Heart left ventricle (tissue), 16 donors: ENCODE measurements at regions of chr20 and their contacts with region 1.

Region 1: DNA sequence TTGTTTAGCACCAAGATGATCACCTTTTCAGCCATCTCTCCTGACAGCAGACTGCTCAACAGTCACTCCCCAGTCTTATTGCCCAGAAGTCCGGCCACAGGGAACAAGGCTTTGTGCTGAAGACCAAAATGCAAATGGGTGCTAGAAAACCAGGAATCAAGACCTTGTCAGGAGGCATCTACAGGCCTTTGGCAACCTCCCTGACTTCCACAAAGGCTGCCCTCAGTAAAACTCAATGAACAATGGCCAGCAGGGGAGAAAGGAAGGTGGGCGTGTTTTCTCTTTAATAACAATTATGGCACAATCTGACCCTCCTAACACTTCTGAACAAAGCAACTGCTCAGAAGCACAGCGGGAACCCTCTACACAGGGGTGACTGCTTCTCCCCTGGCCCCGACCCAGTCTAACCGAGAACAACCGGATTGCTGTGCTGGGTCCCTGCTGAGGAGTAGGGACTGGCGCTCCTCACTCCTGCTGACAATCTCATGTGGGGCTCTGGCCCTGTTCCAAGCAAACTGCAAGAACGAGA is 41.6 kb downstream of the PLCG1 start:
- DNase-seq: peak in 4 of 5 donors; percentile 47 to 68 (median 64)
- ATAC-seq: peak; percentile 11 to 42 (median 27)
- H3K4me3 ChIP-seq: no peak overlapping the region
- H3K27ac ChIP-seq: peak overlapping the region; percentile 66 to 93 (median 82)
- H3K4me1 ChIP-seq: peaks cover 12 to 69% (median 52%) of the 10 kb centered on the region in 12 donors
- H3K27me3 ChIP-seq: no peaks in the 10 kb centered on the region
- CTCF ChIP-seq: peak in 3 of 12 donors; percentile 16 to 17 (median 16)
- POLR2A ChIP-seq: no peak

Region 2: GRCh38 chr20:41057999-41058896 is 120.7 kb before region 1 on chr20:
- intact Hi-C with region 1: no loop called
- DNase-seq: no peak
- ATAC-seq: peak in 3 of 4 donors; percentile 66 to 80 (median 79)
- H3K4me3 ChIP-seq: no peak overlapping the region
- H3K27ac ChIP-seq: peak overlapping the region in 1 of 12 donors; percentile 47
- H3K4me1 ChIP-seq: peaks cover 9 to 60% (median 48%) of the 10 kb centered on the region in 12 donors
- H3K27me3 ChIP-seq: no peaks in the 10 kb centered on the region
- CTCF ChIP-seq: no peak
- POLR2A ChIP-seq: no peak

Region 3: GRCh38 chr20:41232973-41233926 is 54.3 kb after region 1 on chr20:
- intact Hi-C with region 1: loop called in 6 of 10 experiments (anchors 1 to 2 kb)
- DNase-seq: no peak
- ATAC-seq: peak in 3 of 4 donors; percentile 35 to 62 (median 55)
- H3K4me3 ChIP-seq: peak overlapping the region in 3 of 12 donors; percentile 18 to 33 (median 31)
- H3K27ac ChIP-seq: peak overlapping the region; percentile 41 to 83 (median 76)
- H3K4me1 ChIP-seq: peaks cover 15 to 68% (median 50%) of the 10 kb centered on the region in 12 donors
- H3K27me3 ChIP-seq: no peaks in the 10 kb centered on the region
- CTCF ChIP-seq: no peak
- POLR2A ChIP-seq: no peak